ENCODE measurements at regions of chr2 and their contacts with region 1.

Region 1: DNA sequence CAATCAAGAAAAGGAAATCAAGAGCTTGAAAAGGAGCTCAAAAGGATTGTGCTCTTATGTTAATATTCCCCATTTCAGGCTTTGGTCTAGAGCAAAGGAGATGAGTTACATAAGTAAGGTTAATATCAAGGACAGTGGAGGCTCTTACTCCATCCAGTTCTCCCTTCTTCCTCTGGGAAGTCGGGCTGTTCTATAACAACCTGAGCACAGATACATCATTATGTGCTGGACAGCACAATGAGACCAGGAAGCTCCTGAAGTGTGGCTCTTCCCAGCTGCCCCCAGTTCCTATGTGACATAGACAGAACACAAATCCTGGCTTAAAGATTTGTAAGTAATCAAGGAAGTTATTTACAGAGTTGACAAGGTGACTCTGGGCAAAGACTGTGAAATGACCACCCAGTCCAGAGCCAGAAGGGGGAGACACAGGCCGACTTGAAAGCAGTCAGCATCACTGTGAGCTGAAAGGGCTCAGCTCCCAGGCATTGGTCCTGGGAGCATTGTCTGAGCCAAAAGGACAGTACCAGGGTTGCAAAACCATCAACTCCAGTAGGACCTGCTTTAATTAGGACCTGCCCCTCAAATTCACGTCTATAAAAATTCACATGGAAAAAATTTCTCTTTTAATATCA is 917.6 kb upstream of the ACVR2A start:
- DNase-seq: peak; percentile 31
- ATAC-seq: peak; percentile 99
- H3K4me3 ChIP-seq: no peak overlapping the region
- H3K27ac ChIP-seq: no peak overlapping the region
- H3K4me1 ChIP-seq: no peaks in the 10 kb centered on the region
- H3K27me3 ChIP-seq: no peaks in the 10 kb centered on the region
- CTCF ChIP-seq: peak; percentile 34
- POLR2A ChIP-seq: no peak
- RAD21 ChIP-seq: peak; percentile 43; the same call in 1 of the 2 replicates

Region 2: GRCh38 chr2:146853741-146854444 is 73.3 kb before region 1 on chr2:
- CTCF ChIA-PET with region 1: no interaction called
- POLR2A ChIA-PET with region 1: no interaction called
- dilution Hi-C with region 1: no loop called
- in situ Hi-C with region 1: no loop called
- intact Hi-C with region 1: no loop called
- DNase-seq: peak; percentile 12
- ATAC-seq: peak; percentile 51; the same call in 1 of the 2 replicates
- H3K4me3 ChIP-seq: no peak overlapping the region
- H3K27ac ChIP-seq: no peak overlapping the region
- H3K4me1 ChIP-seq: no peaks in the 10 kb centered on the region
- H3K27me3 ChIP-seq: no peaks in the 10 kb centered on the region
- CTCF ChIP-seq: no peak
- POLR2A ChIP-seq: no peak
- RAD21 ChIP-seq: no peak

Region 3: DNA sequence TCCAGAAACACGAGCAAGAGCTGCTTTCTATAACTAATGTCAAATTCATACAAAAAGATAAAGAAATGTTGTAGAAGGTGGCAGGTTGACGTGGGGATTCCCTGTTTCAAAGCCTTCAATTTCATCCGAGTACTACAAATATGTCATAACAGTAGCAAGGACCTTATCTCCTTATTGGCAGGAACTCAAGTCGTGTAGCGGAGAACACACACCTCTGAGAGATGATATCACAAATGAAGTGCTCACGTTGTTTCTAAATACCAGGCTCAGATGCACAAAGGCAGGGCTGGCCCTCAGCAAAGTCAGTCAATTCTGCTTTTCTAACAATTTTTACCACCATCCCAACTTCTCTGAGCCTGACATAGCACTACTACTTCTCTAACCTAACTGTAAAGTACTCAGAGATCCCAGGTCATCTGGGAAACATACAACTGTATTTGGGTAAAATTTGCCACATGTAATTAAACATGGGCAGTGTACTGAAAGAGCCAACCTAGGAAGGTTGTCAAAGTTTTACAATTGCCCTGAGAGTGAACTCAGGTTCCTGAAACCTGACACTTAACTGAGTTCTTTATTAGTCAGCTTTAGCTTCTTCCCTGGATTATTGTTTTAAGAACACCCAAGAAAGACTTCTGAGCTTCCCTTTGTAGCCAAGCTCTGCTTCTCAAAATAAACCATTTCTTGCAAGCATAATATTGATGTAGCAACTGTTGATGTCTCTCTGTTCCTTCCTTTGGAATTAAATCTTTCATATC is 103.9 kb after region 1 on chr2:
- CTCF ChIA-PET with region 1: no interaction called
- POLR2A ChIA-PET with region 1: no interaction called
- dilution Hi-C with region 1: no loop called
- in situ Hi-C with region 1: no loop called
- intact Hi-C with region 1: loop called (anchors 5 kb)
- DNase-seq: peak; percentile 54
- ATAC-seq: peak; percentile 46; the same call in 1 of the 2 replicates
- H3K4me3 ChIP-seq: no peak overlapping the region
- H3K27ac ChIP-seq: no peak overlapping the region
- H3K4me1 ChIP-seq: peaks cover 13% of the 10 kb centered on the region; the same call in 1 of the 2 replicates
- H3K27me3 ChIP-seq: no peaks in the 10 kb centered on the region; the same call in 1 of the 2 replicates
- CTCF ChIP-seq: no peak
- POLR2A ChIP-seq: no peak
- RAD21 ChIP-seq: no peak

Region 4: DNA sequence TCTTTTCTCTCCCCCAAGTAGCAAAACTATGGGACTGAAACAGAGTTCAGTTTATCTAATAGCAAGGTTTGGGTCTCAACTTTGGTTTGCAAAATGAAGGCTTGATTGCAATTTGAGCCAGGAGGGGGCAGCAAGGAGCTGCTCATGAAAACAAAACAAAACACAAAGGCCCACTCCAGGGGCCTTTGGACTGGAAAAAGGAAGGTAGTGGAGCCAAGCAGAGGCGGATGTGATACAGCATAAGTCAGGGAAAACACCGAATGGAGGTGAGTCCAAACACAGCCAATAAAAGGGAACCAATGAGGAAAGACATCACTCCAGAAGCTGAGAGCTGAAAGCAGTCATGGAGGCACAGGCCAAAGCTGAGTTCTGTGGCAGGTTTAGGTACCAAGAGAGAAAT is 117.9 kb after region 1 on chr2:
- CTCF ChIA-PET with region 1: no interaction called
- POLR2A ChIA-PET with region 1: no interaction called
- dilution Hi-C with region 1: no loop called
- in situ Hi-C with region 1: no loop called
- intact Hi-C with region 1: loop called (anchors 5 kb)
- DNase-seq: peak; percentile 22
- ATAC-seq: peak; percentile 67
- H3K4me3 ChIP-seq: no peak overlapping the region
- H3K27ac ChIP-seq: no peak overlapping the region
- H3K4me1 ChIP-seq: no peaks in the 10 kb centered on the region; the same call in 1 of the 2 replicates
- H3K27me3 ChIP-seq: no peaks in the 10 kb centered on the region
- CTCF ChIP-seq: peak; percentile 41
- POLR2A ChIP-seq: no peak
- RAD21 ChIP-seq: peak; percentile 36; the same call in 1 of the 2 replicates

Region 5: GRCh38 chr2:147331790-147332419 is 404.7 kb after region 1 on chr2:
- CTCF ChIA-PET with region 1: no interaction called
- POLR2A ChIA-PET with region 1: no interaction called
- dilution Hi-C with region 1: no loop called
- in situ Hi-C with region 1: no loop called
- intact Hi-C with region 1: loop called (anchors 1 kb)
- DNase-seq: no peak
- ATAC-seq: no peak
- H3K4me3 ChIP-seq: no peak overlapping the region
- H3K27ac ChIP-seq: no peak overlapping the region
- H3K4me1 ChIP-seq: no peaks in the 10 kb centered on the region
- H3K27me3 ChIP-seq: no peaks in the 10 kb centered on the region
- CTCF ChIP-seq: no peak
- POLR2A ChIP-seq: no peak
- RAD21 ChIP-seq: no peak

Region 6: DNA sequence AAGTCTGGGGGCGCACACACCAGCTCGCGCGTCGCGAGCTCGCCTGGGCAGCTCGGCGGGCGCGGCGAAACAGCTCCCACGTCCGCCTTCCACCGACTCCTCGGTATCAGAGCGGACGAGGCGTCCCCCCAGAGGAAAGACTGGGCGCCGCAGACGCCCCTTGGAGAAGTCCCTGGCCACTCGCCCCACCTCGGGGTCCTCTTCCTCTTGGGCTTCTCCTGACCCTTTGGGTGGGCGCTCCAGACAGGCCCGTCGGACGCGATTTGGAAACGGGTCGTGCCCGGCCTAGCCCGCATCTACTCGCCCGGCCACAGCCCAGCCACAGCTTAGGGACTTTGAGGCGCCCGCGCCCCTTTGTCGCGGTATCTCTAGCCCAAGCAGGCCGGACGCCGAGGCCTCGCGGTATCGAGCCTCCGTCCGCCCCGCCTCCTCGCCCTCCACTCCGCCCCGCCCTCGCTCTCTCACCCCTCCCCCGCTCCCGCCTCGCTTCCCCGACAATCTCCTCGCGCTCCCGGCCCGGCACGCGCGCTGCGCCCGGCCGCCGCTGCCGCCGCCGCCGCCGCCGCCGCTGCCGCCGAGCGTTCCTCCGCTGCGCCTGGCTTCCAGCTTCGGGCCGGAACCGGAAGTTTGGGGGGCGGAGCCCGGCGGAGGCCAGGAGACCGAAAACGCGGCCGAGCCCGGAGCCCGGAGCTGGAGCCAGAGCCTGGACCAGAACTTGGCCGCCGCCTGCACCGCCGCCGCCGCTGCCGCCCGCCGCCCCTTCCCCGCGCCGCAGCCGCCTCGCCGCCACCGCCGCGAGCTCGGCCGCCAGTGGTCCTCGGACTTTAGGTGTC is 916.9 kb after region 1 on chr2:
- CTCF ChIA-PET with region 1: no interaction called
- POLR2A ChIA-PET with region 1: no interaction called
- dilution Hi-C with region 1: no loop called
- in situ Hi-C with region 1: no loop called
- intact Hi-C with region 1: loop called (anchors 1 kb)
- DNase-seq: peak; percentile 85
- ATAC-seq: peak; percentile 93
- H3K4me3 ChIP-seq: peak overlapping the region; percentile 96
- H3K27ac ChIP-seq: peak overlapping the region; percentile 93
- H3K4me1 ChIP-seq: peaks cover 3% of the 10 kb centered on the region; the same call in 1 of the 2 replicates
- H3K27me3 ChIP-seq: no peaks in the 10 kb centered on the region
- CTCF ChIP-seq: peak; percentile 22; the same call in 1 of the 2 replicates
- POLR2A ChIP-seq: peak; percentile 78
- RAD21 ChIP-seq: no peak